ENCODE measurements at regions of chr16 and their contacts with region 1.

Region 1: GRCh38 chr16:55465077-55465896 is 13.7 kb upstream of the MMP2 start:
- DNase-seq: peak; percentile 89
- H3K4me3 ChIP-seq: no peak overlapping the region
- H3K27ac ChIP-seq: no peak overlapping the region
- H3K4me1 ChIP-seq: no peaks in the 10 kb centered on the region
- H3K27me3 ChIP-seq: no peaks in the 10 kb centered on the region
- CTCF ChIP-seq: peak; percentile 99

Region 2: DNA sequence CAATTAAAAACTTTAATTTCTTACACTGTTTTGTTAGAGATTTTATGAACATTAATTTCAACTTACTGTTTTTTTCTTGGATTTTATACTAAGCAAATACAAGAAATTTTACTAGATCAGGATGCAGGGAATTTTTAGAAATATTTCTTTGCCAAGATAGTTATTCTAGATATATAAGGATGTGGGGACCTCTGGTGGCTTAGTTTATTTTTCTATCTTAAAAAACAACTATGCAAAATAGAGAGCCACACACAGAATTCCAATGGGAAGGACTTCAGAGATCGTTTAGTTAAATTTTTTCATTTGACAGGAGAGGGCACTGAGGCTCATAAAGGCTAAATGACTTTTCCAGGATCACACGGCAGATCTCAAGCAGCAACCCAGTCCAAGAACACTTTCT is 78.2 kb after region 1 on chr16:
- intact Hi-C with region 1: loop called (anchors 5 kb)
- DNase-seq: no peak
- H3K4me3 ChIP-seq: no peak overlapping the region
- H3K27ac ChIP-seq: no peak overlapping the region
- H3K4me1 ChIP-seq: no peaks in the 10 kb centered on the region
- H3K27me3 ChIP-seq: no peaks in the 10 kb centered on the region
- CTCF ChIP-seq: no peak

Region 3: DNA sequence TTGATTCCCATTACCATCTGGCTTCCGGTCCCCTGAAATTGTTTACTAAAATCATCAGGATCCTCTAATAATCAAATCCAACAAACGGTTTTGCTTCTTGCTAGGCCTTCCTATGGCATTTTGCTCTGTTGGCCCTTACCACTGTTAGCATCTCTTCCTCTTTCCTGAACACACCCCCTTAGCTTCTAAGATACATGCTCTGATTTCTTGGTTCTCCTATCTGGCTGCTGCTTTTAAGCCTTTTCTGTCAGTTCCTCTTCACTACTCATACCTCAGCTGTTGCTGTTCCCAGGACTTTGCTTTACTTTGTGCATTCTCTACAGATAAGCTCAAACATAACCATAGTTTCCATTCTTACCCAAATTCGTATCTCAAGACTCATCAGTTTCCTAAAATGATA is 112.6 kb after region 1 on chr16:
- intact Hi-C with region 1: no loop called
- DNase-seq: no peak
- H3K4me3 ChIP-seq: no peak overlapping the region
- H3K27ac ChIP-seq: no peak overlapping the region
- H3K4me1 ChIP-seq: no peaks in the 10 kb centered on the region
- H3K27me3 ChIP-seq: no peaks in the 10 kb centered on the region
- CTCF ChIP-seq: no peak

Region 4: GRCh38 chr16:55701442-55702319 is 236.4 kb after region 1 on chr16:
- intact Hi-C with region 1: loop called (anchors 2 kb)
- DNase-seq: peak; percentile 52
- H3K4me3 ChIP-seq: no peak overlapping the region
- H3K27ac ChIP-seq: no peak overlapping the region
- H3K4me1 ChIP-seq: no peaks in the 10 kb centered on the region
- H3K27me3 ChIP-seq: no peaks in the 10 kb centered on the region
- CTCF ChIP-seq: peak; percentile 39

Region 5: GRCh38 chr16:55842369-55843104 is 377.2 kb after region 1 on chr16:
- intact Hi-C with region 1: loop called (anchors 5 kb)
- DNase-seq: no peak
- H3K4me3 ChIP-seq: no peak overlapping the region
- H3K27ac ChIP-seq: no peak overlapping the region
- H3K4me1 ChIP-seq: no peaks in the 10 kb centered on the region
- H3K27me3 ChIP-seq: no peaks in the 10 kb centered on the region
- CTCF ChIP-seq: peak; percentile 54

Region 6: GRCh38 chr16:55876854-55877253 is 411.6 kb after region 1 on chr16:
- intact Hi-C with region 1: no loop called
- DNase-seq: no peak
- H3K4me3 ChIP-seq: no peak overlapping the region
- H3K27ac ChIP-seq: no peak overlapping the region
- H3K4me1 ChIP-seq: no peaks in the 10 kb centered on the region
- H3K27me3 ChIP-seq: no peaks in the 10 kb centered on the region
- CTCF ChIP-seq: no peak